HCT116 (cell line): ENCODE measurements at regions of chr10 and their contacts with region 1.

Region 1: DNA sequence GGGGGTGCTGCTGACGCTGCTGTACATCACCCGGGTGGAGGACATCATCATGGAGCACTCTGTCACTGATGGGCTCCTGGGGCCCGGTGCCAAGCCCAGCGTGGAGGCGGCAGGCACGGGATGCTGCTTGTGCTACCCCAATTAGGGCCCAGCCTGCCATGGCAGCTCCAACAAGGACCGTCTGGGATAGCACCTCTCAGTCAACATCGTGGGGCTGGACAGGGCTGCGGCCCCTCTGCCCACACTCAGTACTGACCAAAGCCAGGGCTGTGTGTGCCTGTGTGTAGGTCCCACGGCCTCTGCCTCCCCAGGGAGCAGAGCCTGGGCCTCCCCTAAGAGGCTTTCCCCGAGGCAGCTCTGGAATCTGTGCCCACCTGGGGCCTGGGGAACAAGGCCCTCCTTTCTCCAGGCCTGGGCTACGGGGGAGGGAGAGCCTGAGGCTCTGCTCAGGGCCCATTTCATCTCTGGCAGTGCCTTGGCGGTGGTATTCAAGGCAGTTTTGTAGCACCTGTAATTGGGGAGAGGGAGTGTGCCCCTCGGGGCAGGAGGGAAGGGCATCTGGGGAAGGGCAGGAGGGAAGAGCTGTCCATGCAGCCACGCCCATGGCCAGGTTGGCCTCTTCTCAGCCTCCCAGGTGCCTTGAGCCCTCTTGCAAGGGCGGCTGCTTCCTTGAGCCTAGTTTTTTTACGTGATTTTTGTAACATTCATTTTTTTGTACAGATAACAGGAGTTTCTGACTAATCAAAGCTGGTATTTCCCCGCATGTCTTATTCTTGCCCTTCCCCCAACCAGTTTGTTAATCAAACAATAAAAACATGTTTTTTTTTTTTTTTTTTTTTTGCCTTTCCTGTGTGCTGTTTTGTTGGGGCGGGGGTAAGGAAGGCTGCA is 55.8 kb downstream of the TSPAN15 start:
- DNase-seq: no peak
- ATAC-seq: no peak
- H3K4me3 ChIP-seq: peak overlapping the region in 1 of 2 experiments; percentile 21; a peak in 3 of 4 replicates
- H3K27ac ChIP-seq: peak overlapping the region; percentile 41; the same call in 1 of the 2 replicates
- H3K4me1 ChIP-seq: peaks cover 7 to 13% of the 10 kb centered on the region in 2 experiments; a peak in 3 of 4 replicates
- H3K27me3 ChIP-seq: no peaks in the 10 kb centered on the region
- CTCF ChIP-seq: no peak
- POLR2A ChIP-seq: no peak
- RAD21 ChIP-seq: no peak

Region 2: GRCh38 chr10:69237528-69238159 is 269.4 kb before region 1 on chr10:
- CTCF ChIA-PET with region 1: no interaction called
- POLR2A ChIA-PET with region 1: no interaction called
- RAD21 ChIA-PET with region 1: interaction called in 1 of 2 experiments, 3 read pairs
- intact Hi-C with region 1: loop called (anchors 5 kb)
- DNase-seq: peak; percentile 59
- ATAC-seq: peak; percentile 99
- H3K4me3 ChIP-seq: no peak overlapping the region
- H3K27ac ChIP-seq: no peak overlapping the region
- H3K4me1 ChIP-seq: peaks cover 4 to 16% of the 10 kb centered on the region in 2 experiments
- H3K27me3 ChIP-seq: no peaks in the 10 kb centered on the region
- CTCF ChIP-seq: peak; percentile 89 to 93 (median 90)
- POLR2A ChIP-seq: no peak
- RAD21 ChIP-seq: peak; percentile 98

Region 3: DNA sequence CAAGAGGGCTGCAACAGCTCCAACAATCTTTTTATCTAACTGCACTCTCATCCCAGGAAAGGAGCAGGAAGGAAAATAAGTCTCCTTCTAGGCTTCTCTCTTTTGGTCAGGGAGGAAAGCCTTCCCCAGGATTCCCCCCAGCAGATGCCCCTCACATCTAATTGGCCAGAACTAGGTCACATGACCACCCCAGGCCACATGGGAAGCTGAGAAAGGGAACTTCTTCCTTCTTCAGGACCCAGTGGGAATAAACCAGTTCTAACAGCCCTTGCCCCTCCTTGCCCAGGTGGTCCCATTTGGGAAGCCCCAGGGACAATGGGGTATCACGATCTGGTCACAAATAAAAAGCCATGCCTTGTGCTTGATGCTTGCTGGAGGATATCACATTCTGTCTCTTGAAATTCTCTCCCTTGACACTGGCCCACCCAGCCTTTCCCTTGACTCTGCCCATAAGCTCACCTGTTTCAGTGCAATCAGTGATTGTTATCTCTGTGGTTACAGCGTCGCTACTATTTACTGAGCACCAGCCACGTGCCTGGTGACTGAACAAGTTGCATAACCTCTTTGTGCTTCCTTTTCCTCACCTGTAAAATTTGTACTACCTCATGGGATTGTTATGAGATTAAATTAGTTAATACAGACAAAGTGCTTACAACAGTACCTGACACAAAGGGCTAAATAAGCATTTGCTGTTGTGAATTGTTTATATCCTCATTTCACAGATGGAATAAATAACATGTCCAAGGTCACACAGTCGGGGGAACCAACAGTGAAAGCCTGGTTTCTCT is 81.4 kb before region 1 on chr10:
- CTCF ChIA-PET with region 1: interaction called, 13 read pairs
- POLR2A ChIA-PET with region 1: no interaction called
- RAD21 ChIA-PET with region 1: interaction called in 1 of 2 experiments, 4 read pairs
- intact Hi-C with region 1: loop called (anchors 1 kb)
- DNase-seq: no peak
- ATAC-seq: no peak
- H3K4me3 ChIP-seq: no peak overlapping the region
- H3K27ac ChIP-seq: no peak overlapping the region
- H3K4me1 ChIP-seq: peaks cover 0 to 15% of the 10 kb centered on the region in 2 experiments; a peak in 1 of 4 replicates
- H3K27me3 ChIP-seq: no peaks in the 10 kb centered on the region
- CTCF ChIP-seq: no peak
- POLR2A ChIP-seq: no peak
- RAD21 ChIP-seq: no peak

Region 4: DNA sequence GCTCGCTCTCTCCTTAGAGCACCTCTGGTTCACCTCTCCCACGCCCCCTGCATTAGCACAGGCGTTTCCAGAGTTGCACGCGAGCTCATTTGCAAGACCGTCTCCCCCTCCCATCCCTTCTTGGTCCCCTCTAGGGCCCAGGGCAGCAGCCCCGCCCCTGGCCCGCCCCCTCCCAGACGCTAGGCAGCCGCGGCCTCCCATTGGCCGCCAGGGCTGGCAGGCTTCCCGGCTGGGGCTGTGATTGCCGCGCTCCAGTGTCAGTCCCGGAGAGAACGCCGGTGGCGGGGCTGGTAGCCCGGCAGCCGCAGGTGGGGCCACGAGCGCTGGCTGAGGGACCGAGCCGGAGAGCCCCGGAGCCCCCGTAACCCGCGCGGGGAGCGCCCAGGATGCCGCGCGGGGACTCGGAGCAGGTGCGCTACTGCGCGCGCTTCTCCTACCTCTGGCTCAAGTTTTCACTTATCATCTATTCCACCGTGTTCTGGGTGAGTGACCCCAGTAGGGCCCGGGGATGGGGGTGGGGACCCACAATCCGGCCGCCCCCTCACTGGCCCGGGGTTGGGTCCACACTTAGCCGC is 55.8 kb before region 1 on chr10 and contains the start of gene TSPAN15:
- CTCF ChIA-PET with region 1: interaction called, 8 read pairs
- POLR2A ChIA-PET with region 1: no interaction called
- RAD21 ChIA-PET with region 1: interaction called, 3 to 9 read pairs
- intact Hi-C with region 1: loop called (anchors 10 kb)
- DNase-seq: peak; percentile 75
- ATAC-seq: peak; percentile 84
- H3K4me3 ChIP-seq: peak within 1 kb of the TSS; percentile 73 to 82
- H3K27ac ChIP-seq: peak within 1 kb of the TSS; percentile 58
- H3K4me1 ChIP-seq: peaks cover 35 to 64% of the 10 kb centered on the region in 2 experiments
- H3K27me3 ChIP-seq: no peaks in the 10 kb centered on the region
- CTCF ChIP-seq: no peak
- POLR2A ChIP-seq: no peak
- RAD21 ChIP-seq: no peak
- total RNA-seq, gene TSPAN15: 16.0 TPM

Region 5: GRCh38 chr10:69819716-69820506 is 312.8 kb after region 1 on chr10:
- CTCF ChIA-PET with region 1: no interaction called
- POLR2A ChIA-PET with region 1: no interaction called
- RAD21 ChIA-PET with region 1: no interaction called
- intact Hi-C with region 1: no loop called
- DNase-seq: no peak
- ATAC-seq: peak; percentile 72
- H3K4me3 ChIP-seq: no peak overlapping the region
- H3K27ac ChIP-seq: no peak overlapping the region
- H3K4me1 ChIP-seq: peaks cover 3 to 23% of the 10 kb centered on the region in 2 experiments; a peak in 3 of 4 replicates
- H3K27me3 ChIP-seq: no peaks in the 10 kb centered on the region
- CTCF ChIP-seq: no peak
- POLR2A ChIP-seq: no peak
- RAD21 ChIP-seq: no peak

Region 6: DNA sequence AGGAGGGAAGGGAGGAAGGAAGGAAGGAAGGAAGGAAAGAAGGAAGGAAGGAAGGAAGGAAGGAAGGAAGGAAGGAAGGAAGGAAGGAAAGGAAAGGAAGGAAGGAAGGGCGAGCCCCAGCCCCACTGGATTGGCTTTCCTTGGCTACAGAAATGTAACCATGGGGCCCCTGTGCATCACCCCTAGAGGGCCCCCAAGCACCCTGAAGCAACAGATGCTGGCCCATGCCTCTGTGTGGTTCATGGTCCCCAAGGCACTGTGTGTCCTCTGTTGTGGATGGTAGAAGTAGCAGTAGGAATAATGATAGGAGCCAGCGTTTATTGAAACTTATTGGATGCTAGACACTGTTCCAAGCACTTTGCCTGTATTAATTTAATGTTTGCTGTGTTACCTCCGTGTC is 429.0 kb after region 1 on chr10:
- CTCF ChIA-PET with region 1: no interaction called
- POLR2A ChIA-PET with region 1: no interaction called
- RAD21 ChIA-PET with region 1: no interaction called
- intact Hi-C with region 1: no loop called
- DNase-seq: no peak
- ATAC-seq: peak; percentile 84
- H3K4me3 ChIP-seq: no peak overlapping the region
- H3K27ac ChIP-seq: no peak overlapping the region
- H3K4me1 ChIP-seq: no peaks in the 10 kb centered on the region
- H3K27me3 ChIP-seq: no peaks in the 10 kb centered on the region
- CTCF ChIP-seq: peak; percentile 21 to 42 (median 26); a peak in 3 of 6 replicates
- POLR2A ChIP-seq: no peak
- RAD21 ChIP-seq: peak; percentile 40; the same call in 1 of the 2 replicates